ENCODE measurements at regions of chr2 and their contacts with region 1.

Region 1: DNA sequence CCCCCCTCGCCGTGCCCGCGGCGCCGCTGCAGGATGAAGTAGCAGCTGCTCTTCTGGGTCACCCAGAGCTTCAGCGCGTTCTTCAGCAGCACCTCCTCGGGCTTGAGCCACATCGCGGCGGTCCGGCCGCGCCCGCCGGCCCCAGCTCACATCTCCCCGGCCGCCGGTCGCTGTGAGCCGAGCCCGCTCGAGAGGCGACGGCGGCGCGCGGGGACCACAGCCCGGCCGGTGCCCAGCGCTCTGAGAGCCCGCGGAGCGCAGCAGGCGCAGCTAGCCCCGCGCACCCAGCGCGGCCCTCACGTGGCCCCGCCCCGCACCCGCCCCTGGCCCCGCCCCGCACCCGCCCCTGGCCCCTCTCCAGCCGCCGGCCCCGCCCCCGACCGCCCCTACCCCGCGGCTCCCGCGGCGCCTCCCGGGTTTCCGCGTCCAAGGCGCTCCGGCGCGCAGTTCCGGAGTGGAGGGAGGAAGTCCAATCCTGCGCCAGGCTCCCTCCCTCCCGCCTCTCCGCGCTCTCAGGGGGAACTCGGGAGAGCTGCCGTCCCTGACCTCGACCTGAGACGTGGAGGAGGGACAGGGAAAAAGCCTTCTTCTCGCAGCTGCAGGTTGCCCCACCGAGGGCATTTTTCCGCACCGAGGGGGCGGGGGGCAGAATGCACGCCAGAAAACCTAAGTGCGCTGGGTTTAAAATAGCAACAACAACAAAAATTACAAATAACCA is at the start of gene TBC1D8:
- DNase-seq: peak; percentile 90
- H3K4me3 ChIP-seq: peak within 1 kb of the TSS; percentile 93
- H3K27ac ChIP-seq: peak within 1 kb of the TSS; percentile 95
- H3K4me1 ChIP-seq: peaks cover 81% of the 10 kb centered on the region
- H3K27me3 ChIP-seq: no peaks in the 10 kb centered on the region
- CTCF ChIP-seq: no peak
- total RNA-seq, gene TBC1D8: 45.0 TPM

Region 2: DNA sequence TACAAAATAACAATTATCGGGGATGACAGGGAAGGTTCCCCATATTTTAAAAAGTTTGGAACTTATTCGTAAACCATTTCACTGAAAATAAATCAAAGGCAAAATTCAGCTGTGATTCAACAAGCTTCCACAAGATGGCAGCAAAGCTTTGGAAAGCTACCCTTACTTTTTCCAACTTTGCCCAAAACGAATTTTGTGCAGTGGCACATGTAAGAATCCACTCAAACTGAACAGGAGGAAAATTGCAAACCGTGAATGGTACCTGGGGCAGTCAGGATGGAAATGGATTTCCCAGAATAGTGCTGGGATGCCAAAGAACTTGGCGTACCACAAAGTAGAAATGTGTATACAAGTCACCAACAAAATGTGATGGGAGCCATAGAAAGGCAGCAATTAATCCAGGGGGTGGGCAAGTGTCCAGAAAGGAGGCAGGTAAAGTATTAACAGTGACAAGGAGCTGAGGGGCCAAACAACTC is 138.6 kb before region 1 on chr2:
- intact Hi-C with region 1: loop called (anchors 5 kb)
- DNase-seq: no peak
- H3K4me3 ChIP-seq: no peak overlapping the region
- H3K27ac ChIP-seq: no peak overlapping the region
- H3K4me1 ChIP-seq: no peaks in the 10 kb centered on the region
- H3K27me3 ChIP-seq: no peaks in the 10 kb centered on the region
- CTCF ChIP-seq: peak; percentile 89

Region 3: DNA sequence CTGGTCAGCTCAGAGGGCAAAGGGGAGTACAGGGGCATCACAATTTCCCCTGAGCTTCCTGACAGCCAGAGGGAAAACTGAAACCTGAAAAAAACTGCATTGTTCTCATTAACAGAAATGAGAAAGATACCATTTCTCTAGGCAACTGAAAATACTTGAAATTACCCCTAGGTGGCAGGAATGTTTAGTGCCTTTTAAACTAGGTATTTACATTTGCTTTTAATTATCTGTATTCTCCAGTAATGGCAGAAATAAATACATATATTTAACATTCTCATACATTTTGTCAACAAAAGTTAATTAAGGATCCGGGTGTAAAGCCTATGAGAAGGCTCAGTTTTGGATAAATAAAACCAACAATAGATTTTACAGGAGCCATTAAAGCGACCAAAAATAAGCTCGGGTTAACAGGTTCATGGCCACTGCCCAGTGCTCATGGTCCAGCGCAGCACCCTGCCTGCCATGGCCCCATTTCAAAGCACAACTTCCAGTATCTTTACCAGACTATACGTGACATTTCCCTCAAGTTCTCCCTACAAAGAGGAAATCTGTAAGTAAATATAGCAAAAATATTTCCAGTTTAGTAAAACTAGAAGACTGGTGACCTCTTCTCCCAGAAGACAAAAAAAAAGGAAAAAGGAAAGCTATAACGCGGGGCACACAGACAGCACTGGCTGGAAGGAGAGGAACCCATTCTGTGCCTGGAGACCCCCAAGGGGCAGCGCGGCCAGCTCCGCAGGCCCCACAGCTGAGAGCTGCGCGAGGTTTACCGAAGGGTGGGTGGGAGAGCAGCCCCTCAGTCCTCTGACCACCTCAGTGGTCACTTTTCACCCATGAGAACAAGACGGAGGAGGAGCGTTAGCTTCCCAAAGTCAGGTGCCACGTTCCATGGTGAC is 114.5 kb before region 1 on chr2:
- intact Hi-C with region 1: loop called (anchors 5 kb)
- DNase-seq: no peak
- H3K4me3 ChIP-seq: no peak overlapping the region
- H3K27ac ChIP-seq: no peak overlapping the region
- H3K4me1 ChIP-seq: peaks cover 16% of the 10 kb centered on the region
- H3K27me3 ChIP-seq: no peaks in the 10 kb centered on the region
- CTCF ChIP-seq: peak; percentile 57

Region 4: GRCh38 chr2:101096619-101097142 is 54.6 kb before region 1 on chr2:
- intact Hi-C with region 1: no loop called
- DNase-seq: no peak
- H3K4me3 ChIP-seq: no peak overlapping the region
- H3K27ac ChIP-seq: peak overlapping the region; percentile 7
- H3K4me1 ChIP-seq: peaks cover 27% of the 10 kb centered on the region
- H3K27me3 ChIP-seq: no peaks in the 10 kb centered on the region
- CTCF ChIP-seq: no peak